Heart right ventricle (tissue), 16 donors: ENCODE measurements at regions of chr9 and their contacts with region 1.

Region 1: GRCh38 chr9:86022687-86023266 is 76.6 kb downstream of the GOLM1 start:
- DNase-seq: no peak
- ATAC-seq: no peak
- H3K4me3 ChIP-seq: no peak overlapping the region
- H3K27ac ChIP-seq: no peak overlapping the region
- H3K4me1 ChIP-seq: peaks cover 0 to 8% (median 0%) of the 10 kb centered on the region in 9 donors
- H3K27me3 ChIP-seq: no peaks in the 10 kb centered on the region
- CTCF ChIP-seq: no peak

Region 2: GRCh38 chr9:85960688-85961093 is 62.1 kb before region 1 on chr9:
- intact Hi-C with region 1: loop called in 1 of 10 experiments (anchors 10 kb)
- DNase-seq: peak in 1 of 2 donors; percentile 23
- ATAC-seq: peak in 5 of 8 donors; percentile 46 to 72 (median 58)
- H3K4me3 ChIP-seq: no peak overlapping the region
- H3K27ac ChIP-seq: peak overlapping the region in 2 of 10 donors; percentile 17 to 41
- H3K4me1 ChIP-seq: peaks cover 0 to 15% (median 9%) of the 10 kb centered on the region in 9 donors
- H3K27me3 ChIP-seq: no peaks in the 10 kb centered on the region
- CTCF ChIP-seq: no peak

Region 3: GRCh38 chr9:85978496-85978895 is 44.3 kb before region 1 on chr9:
- intact Hi-C with region 1: no loop called
- DNase-seq: no peak
- ATAC-seq: no peak
- H3K4me3 ChIP-seq: no peak overlapping the region
- H3K27ac ChIP-seq: no peak overlapping the region
- H3K4me1 ChIP-seq: peaks cover 0 to 21% (median 0%) of the 10 kb centered on the region in 9 donors
- H3K27me3 ChIP-seq: no peaks in the 10 kb centered on the region
- CTCF ChIP-seq: no peak